ENCODE measurements at regions of chr9 and their contacts with region 1.

Region 1: GRCh38 chr9:35814841-35815543 is at the start of gene HINT2:
- DNase-seq: peak; percentile 94
- H3K4me3 ChIP-seq: peak within 1 kb of the TSS; percentile 87
- CTCF ChIP-seq: no peak

Region 2: DNA sequence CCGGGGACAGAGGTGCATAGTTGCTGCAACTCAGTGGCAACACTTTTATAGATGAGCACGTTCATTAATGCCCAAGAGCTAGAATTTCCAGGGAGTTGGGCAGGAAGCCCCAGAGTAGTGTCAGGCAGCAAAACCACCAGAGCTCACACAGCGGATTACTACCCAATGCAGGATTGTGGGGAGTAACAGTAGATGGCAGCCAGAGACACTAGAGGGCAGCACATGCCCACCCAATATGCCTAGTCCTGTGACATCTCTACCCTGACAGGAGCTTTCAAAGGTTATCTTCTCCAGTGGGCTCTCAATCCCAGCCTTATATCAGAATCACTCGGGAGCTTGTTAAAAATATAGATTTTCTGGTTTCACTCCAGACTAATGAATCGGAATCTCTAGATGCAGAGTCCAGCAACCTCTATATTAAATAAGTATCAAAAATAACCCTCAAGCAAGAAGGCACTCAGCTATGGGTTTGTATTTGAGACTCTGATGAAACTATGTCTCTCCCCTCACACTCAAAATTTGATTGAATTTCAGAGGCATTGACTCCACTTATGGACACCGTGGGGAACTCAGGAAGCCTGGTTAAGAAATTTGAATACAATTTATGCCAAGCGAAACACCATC is 915.3 kb before region 1 on chr9:
- CTCF ChIA-PET with region 1: no interaction called
- POLR2A ChIA-PET with region 1: no interaction called
- DNase-seq: no peak
- H3K4me3 ChIP-seq: no peak overlapping the region
- CTCF ChIP-seq: peak; percentile 83

Region 3: GRCh38 chr9:35085078-35085477 is 729.9 kb before region 1 on chr9:
- CTCF ChIA-PET with region 1: no interaction called
- POLR2A ChIA-PET with region 1: no interaction called
- DNase-seq: no peak
- H3K4me3 ChIP-seq: no peak overlapping the region
- CTCF ChIP-seq: no peak

Region 4: DNA sequence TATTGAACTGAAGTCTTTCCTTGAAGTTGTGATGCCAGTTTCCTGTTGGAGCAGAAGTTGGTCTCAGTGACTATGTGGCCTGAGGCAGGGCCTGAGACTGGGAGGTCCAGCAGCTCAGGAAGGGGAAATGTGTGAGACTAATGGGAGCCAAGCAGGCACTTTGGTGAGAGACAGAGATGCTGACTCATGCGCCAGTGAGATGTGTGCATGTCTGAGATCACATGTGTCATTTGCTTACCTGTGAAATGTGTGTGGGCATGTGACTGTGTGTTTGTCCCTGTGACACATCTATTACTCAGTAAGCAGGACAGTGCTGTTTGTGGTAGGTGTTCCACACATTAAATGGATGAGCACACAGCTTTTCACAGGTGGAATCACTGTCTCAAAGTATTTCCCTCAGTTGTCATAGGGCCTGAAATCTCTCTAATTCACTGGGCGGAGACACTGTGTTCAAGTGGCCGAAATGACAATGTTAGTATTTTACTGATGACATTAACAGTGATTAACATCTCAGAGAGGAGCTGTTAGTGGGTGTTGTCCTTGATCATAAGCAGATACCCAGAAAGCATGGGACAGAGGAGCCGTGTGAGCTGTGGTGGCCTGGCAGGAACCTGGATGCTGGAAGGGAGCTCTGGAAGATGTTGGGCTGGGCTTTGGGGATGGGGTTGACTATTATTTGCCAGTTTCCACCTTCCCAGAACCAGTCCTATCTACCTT is 16.2 kb before region 1 on chr9:
- CTCF ChIA-PET with region 1: interaction called, 201 read pairs
- POLR2A ChIA-PET with region 1: interaction called, 5 read pairs
- DNase-seq: no peak
- H3K4me3 ChIP-seq: no peak overlapping the region
- CTCF ChIP-seq: no peak

Region 5: GRCh38 chr9:35835216-35835632 is 20.2 kb after region 1 on chr9:
- CTCF ChIA-PET with region 1: interaction called, 11 read pairs
- POLR2A ChIA-PET with region 1: no interaction called
- DNase-seq: no peak
- H3K4me3 ChIP-seq: no peak overlapping the region
- CTCF ChIP-seq: no peak

Region 6: DNA sequence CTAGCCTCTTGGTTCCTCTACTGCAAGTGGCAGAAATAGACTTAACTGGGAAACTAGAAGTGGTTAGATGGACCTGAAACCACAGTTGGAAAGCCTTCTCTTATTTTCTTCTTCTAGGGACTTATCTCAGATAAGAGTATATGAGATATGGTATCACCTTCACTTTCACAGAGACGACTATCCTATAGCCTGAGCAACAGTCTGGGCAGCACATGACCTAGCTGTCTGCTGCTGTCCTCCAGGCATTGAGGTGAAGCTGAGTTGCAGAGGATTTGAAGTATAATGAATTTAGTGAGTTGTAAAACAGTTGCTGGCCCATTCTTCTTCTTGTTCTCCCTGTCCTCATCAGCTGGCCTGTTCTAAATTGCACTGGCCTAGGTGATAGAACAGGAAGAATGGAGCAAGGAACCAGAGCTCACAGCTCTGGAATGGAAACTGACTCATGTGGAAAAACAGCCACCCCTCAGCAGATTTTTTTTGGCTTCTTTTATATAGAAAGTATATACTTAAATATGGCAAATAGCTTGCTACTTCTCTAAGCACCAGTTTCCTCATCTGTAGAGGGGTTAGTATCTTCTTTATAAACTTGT is 249.6 kb after region 1 on chr9:
- CTCF ChIA-PET with region 1: no interaction called
- POLR2A ChIA-PET with region 1: no interaction called
- DNase-seq: no peak
- H3K4me3 ChIP-seq: no peak overlapping the region
- CTCF ChIP-seq: no peak

Measured in AG04449 (cell line).